B cell (primary cell): ENCODE measurements at regions of chr3 and their contacts with region 1.

Region 1: GRCh38 chr3:143045639-143046038 is 44.3 kb downstream of the U2SURP start:
- DNase-seq: no peak
- ATAC-seq: no peak
- H3K4me3 ChIP-seq: no peak overlapping the region
- H3K4me3 Mint-ChIP-seq: no peak overlapping the region
- H3K27ac ChIP-seq: no peak overlapping the region
- H3K27ac Mint-ChIP-seq: no peak overlapping the region
- H3K4me1 ChIP-seq: no peaks in the 10 kb centered on the region
- H3K4me1 Mint-ChIP-seq: no peaks in the 10 kb centered on the region
- H3K27me3 ChIP-seq: no peaks in the 10 kb centered on the region
- H3K27me3 Mint-ChIP-seq: no peaks in the 10 kb centered on the region
- CTCF ChIP-seq: no peak

Region 2: DNA sequence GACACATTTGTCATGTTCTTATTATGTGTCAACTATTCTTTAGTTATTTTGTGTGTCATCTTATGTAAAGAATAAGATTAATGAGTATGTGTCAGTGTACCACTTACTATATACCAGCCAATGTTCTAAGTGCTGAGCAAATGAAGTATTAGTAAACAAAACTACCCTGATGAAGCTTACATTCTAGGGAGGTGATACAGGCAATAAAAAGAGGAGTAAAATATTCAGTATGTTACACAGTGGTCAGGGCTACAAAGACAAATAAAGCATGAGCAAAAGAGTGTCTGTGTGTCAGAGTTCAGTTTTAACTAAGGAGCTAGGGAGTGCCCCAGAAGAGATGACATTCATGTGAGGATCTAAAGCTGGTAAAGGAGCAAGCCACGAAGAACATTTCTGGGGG is 242.7 kb before region 1 on chr3:
- CTCF ChIA-PET with region 1: no interaction called
- POLR2A ChIA-PET with region 1: no interaction called
- intact Hi-C with region 1: no loop called
- DNase-seq: no peak
- ATAC-seq: no peak
- H3K4me3 ChIP-seq: no peak overlapping the region
- H3K4me3 Mint-ChIP-seq: no peak overlapping the region
- H3K27ac ChIP-seq: no peak overlapping the region
- H3K27ac Mint-ChIP-seq: no peak overlapping the region
- H3K4me1 ChIP-seq: no peaks in the 10 kb centered on the region
- H3K4me1 Mint-ChIP-seq: no peaks in the 10 kb centered on the region
- H3K27me3 ChIP-seq: no peaks in the 10 kb centered on the region
- H3K27me3 Mint-ChIP-seq: no peaks in the 10 kb centered on the region
- CTCF ChIP-seq: no peak

Region 3: GRCh38 chr3:142993958-142994442 is 51.6 kb before region 1 on chr3:
- CTCF ChIA-PET with region 1: no interaction called
- POLR2A ChIA-PET with region 1: interaction called, 12 read pairs
- intact Hi-C with region 1: no loop called
- DNase-seq: peak; percentile 74
- ATAC-seq: peak; percentile 54
- H3K4me3 ChIP-seq: no peak overlapping the region
- H3K4me3 Mint-ChIP-seq: no peak overlapping the region
- H3K27ac ChIP-seq: peak overlapping the region in 1 of 2 donors; percentile 2
- H3K27ac Mint-ChIP-seq: peak overlapping the region; percentile 54
- H3K4me1 ChIP-seq: peaks cover 14 to 15% of the 10 kb centered on the region in 2 donors
- H3K4me1 Mint-ChIP-seq: peaks cover 15% of the 10 kb centered on the region
- H3K27me3 ChIP-seq: no peaks in the 10 kb centered on the region
- H3K27me3 Mint-ChIP-seq: no peaks in the 10 kb centered on the region
- CTCF ChIP-seq: peak; percentile 89